Heart right ventricle (tissue), 16 donors: ENCODE measurements at regions of chr17 and their contacts with region 1.

Region 1: GRCh38 chr17:80991645-80992076 is at the start of gene CHMP6:
- DNase-seq: peak; percentile 74 to 84
- ATAC-seq: peak; percentile 35 to 77 (median 59)
- H3K4me3 ChIP-seq: peak within 1 kb of the TSS; percentile 67 to 97 (median 92)
- H3K27ac ChIP-seq: peak within 1 kb of the TSS in 9 of 10 donors; percentile 36 to 90 (median 76)
- H3K4me1 ChIP-seq: peaks cover 11 to 45% (median 32%) of the 10 kb centered on the region in 9 donors
- H3K27me3 ChIP-seq: peaks cover 0 to 10% (median 0%) of the 10 kb centered on the region in 7 donors
- CTCF ChIP-seq: peak in 5 of 9 donors; percentile 13 to 48 (median 30)
- total RNA-seq, gene CHMP6: 17.5 to 26.4 (median 22.1) TPM

Region 2: GRCh38 chr17:81034168-81034777 is 42.6 kb after region 1 on chr17:
- intact Hi-C with region 1: no loop called
- DNase-seq: no peak
- ATAC-seq: peak in 5 of 8 donors; percentile 1 to 13 (median 1)
- H3K4me3 ChIP-seq: peak overlapping the region; percentile 44 to 77 (median 66)
- H3K27ac ChIP-seq: peak overlapping the region in 4 of 10 donors; percentile 39 to 59 (median 46)
- H3K4me1 ChIP-seq: peaks cover 21 to 73% (median 63%) of the 10 kb centered on the region in 9 donors
- H3K27me3 ChIP-seq: peaks cover 0 to 17% (median 0%) of the 10 kb centered on the region in 7 donors
- CTCF ChIP-seq: no peak

Region 3: GRCh38 chr17:81094509-81095382 is 103.1 kb after region 1 on chr17:
- intact Hi-C with region 1: loop called in 2 of 10 experiments (anchors 1 to 5 kb)
- DNase-seq: peak in 1 of 2 donors; percentile 57
- ATAC-seq: peak in 6 of 8 donors; percentile 10 to 50 (median 42)
- H3K4me3 ChIP-seq: no peak overlapping the region
- H3K27ac ChIP-seq: peak overlapping the region in 1 of 10 donors; percentile 64
- H3K4me1 ChIP-seq: peaks cover 5 to 55% (median 11%) of the 10 kb centered on the region in 9 donors
- H3K27me3 ChIP-seq: no peaks in the 10 kb centered on the region
- CTCF ChIP-seq: no peak

Region 4: DNA sequence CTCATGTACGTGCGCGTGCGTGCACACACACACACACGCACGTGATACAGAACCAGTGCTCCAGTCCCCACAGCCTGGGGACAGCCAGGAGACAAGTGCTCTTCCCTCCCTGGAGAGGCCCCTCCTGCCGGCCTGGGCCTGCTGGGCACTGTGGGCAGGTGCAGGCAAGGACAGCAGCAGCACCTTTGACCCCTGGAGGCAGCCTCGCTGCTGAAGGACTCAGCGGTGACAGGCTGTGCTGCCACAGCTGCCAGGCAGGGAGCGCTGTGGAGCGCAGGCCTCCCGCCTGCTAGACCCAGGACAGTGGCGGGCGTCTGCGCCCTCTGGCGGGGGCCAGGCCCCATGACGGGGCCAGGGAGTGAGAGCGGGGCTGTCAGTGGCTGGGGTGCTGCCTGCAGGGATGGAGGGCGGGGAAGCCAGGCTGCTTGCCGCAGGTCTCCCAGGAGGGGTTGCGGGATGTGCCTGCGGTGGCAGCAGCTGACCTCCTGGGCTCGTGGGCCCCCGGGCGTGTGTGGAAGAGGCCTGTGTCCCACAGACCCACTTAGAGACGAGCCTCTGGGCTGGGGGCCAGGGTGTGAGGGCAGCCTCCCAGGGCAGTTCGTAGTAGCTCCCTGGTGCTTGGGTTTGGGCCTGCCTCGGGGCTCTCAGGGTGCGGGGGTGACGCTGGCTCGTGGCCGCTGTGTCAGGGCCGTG is 110.1 kb after region 1 on chr17:
- intact Hi-C with region 1: loop called in 8 of 10 experiments (anchors 1 to 10 kb)
- DNase-seq: peak; percentile 73 to 84
- ATAC-seq: peak; percentile 72 to 90 (median 85)
- H3K4me3 ChIP-seq: no peak overlapping the region
- H3K27ac ChIP-seq: no peak overlapping the region
- H3K4me1 ChIP-seq: peaks cover 0 to 25% (median 18%) of the 10 kb centered on the region in 9 donors
- H3K27me3 ChIP-seq: no peaks in the 10 kb centered on the region
- CTCF ChIP-seq: peak; percentile 99 to 100 (median 100)

Region 5: GRCh38 chr17:81238817-81239600 is 247.3 kb after region 1 on chr17 and contains the starts of genes NDUFAF8 and TEPSIN:
- intact Hi-C with region 1: loop called in 1 of 10 experiments (anchors 10 kb)
- DNase-seq: peak; percentile 95 to 98
- ATAC-seq: peak; percentile 96 to 99 (median 98)
- H3K4me3 ChIP-seq: peak within 1 kb of the TSS; percentile 81 to 100 (median 92)
- H3K27ac ChIP-seq: peak within 1 kb of the TSS; percentile 59 to 90 (median 82)
- H3K4me1 ChIP-seq: peaks cover 10 to 52% (median 32%) of the 10 kb centered on the region in 9 donors
- H3K27me3 ChIP-seq: no peaks in the 10 kb centered on the region
- CTCF ChIP-seq: peak in 2 of 9 donors; percentile 8 to 25
- total RNA-seq, gene NDUFAF8: 49.6 to 74.8 (median 58.9) TPM
- total RNA-seq, gene TEPSIN: 6.2 to 21.4 (median 9.2) TPM